Activated naive CD4-positive, alpha-beta T cell treated with anti-CD3 and anti-CD28 coated beads for 36 hours (primary cell): ENCODE measurements at regions of chr6 and their contacts with region 1.

Region 1: DNA sequence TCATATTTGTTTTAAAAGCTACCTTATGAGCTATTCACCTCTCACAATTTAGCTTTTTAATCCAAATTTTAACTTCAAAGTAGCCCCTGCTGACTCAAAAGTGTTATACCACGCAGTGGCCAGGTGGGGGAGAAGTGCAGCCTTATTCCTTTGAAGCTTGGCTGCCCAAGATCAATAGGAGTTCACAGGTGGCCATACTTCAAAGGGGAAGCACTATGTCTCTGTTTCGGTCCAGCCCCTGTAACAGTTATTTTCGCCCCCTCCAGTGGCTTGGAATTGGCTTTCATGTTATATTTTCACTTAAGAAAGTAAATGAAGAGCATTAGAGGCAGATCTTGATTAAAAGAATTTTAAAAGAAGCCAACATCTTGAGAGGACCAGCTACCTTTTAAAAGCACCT is 608.4 kb downstream of the EPHA7 start:
- DNase-seq: peak; percentile 26
- H3K4me3 Mint-ChIP-seq: no peak overlapping the region
- H3K27ac Mint-ChIP-seq: no peak overlapping the region
- H3K4me1 Mint-ChIP-seq: no peaks in the 10 kb centered on the region
- H3K27me3 Mint-ChIP-seq: no peaks in the 10 kb centered on the region

Region 2: DNA sequence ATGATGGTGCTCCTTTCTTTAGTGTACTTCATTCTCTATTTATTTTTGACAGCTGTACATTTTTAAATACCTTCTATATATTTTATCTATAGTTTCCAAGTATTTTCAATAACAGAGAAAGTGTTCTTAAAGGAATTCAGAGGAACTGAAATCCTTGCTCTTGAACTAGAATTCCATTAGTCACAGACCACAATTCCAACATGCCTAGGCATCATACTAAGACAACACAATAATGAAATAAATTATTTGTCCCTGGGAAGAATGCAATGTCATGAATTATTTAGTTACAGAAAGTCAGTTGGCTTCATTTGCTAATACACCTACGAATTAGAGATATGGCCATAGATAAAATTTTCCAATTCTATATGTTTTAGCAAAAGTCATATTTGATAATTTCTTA is 62.8 kb before region 1 on chr6:
- CTCF ChIA-PET with region 1: no interaction called
- intact Hi-C with region 1: no loop called
- DNase-seq: no peak
- H3K4me3 Mint-ChIP-seq: no peak overlapping the region
- H3K27ac Mint-ChIP-seq: no peak overlapping the region
- H3K4me1 Mint-ChIP-seq: no peaks in the 10 kb centered on the region
- H3K27me3 Mint-ChIP-seq: no peaks in the 10 kb centered on the region

Region 3: DNA sequence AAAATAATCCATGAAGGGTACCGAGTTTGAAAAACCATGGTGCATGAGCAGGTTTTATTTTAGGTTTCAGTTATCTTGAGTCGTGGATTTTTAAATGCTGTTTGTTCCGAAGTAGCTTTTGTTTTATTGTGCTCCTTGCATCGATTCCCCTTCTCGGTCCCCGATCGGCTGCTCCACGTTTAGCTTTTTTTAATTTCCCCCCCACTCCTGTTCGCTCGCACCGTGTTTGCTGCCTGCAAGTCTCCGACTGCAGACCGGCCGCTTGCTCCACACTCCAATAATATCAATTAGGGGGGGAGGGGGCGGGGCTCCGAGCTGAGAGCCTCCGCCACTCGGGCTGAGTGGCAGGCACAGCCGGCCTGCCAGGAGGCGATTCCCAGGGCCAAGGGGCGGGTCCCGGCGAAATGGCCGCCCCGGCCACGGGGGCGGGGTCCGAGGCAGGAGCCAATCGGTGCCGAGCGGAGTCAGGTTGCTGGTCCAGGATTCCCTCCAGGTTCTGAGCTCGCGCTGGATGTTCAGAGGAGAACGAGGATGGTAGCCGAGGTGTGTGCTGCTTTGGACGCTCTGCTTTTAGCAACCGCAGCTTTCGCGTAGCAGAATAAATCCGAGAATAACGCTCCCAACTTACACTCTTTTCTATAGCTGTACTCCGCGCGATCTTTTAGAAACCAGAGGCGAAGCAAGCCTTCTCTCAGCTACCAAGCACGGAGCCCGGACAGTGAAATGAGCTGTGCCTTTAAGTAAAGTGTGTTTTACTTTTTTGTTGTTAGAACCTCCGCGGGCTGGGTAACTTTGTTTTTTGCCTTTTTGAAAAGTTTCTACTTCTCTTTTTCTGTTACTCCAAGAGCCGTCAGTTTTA is 608.6 kb after region 1 on chr6 and contains the start of gene EPHA7:
- CTCF ChIA-PET with region 1: no interaction called
- intact Hi-C with region 1: loop called (anchors 5 kb)
- DNase-seq: peak; percentile 40
- H3K4me3 Mint-ChIP-seq: peak within 1 kb of the TSS; percentile 65
- H3K27ac Mint-ChIP-seq: no peak within 1 kb of the TSS
- H3K4me1 Mint-ChIP-seq: peaks cover 18% of the 10 kb centered on the region
- H3K27me3 Mint-ChIP-seq: peaks cover 62% of the 10 kb centered on the region
- total RNA-seq, gene EPHA7: not detected